GM13977 (cell line): ENCODE measurements at regions of chr1 and their contacts with region 1.

Region 1: DNA sequence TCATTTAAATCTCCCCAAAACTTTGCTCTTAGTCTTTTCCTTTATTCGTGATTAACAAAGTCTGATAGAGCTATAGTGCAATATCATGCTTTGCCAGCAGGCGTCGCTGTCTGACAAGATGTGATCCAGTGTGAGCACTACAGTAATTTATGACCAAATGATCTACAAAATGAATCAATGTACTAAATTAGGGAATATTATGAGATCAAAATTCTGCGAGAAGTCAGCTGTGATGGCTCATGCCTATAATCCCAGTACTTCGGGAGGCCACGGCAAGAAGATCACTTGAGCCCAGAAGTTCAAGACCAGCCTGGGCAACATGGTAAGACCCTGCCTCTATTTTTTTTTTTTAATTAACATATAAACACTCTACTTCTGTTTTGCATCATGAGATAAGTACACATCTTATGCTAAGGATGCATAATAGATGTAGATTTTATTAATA is 3.6 kb upstream of the SPSB1 start:
- DNase-seq: peak; percentile 65
- CTCF ChIP-seq: peak; percentile 94

Region 2: DNA sequence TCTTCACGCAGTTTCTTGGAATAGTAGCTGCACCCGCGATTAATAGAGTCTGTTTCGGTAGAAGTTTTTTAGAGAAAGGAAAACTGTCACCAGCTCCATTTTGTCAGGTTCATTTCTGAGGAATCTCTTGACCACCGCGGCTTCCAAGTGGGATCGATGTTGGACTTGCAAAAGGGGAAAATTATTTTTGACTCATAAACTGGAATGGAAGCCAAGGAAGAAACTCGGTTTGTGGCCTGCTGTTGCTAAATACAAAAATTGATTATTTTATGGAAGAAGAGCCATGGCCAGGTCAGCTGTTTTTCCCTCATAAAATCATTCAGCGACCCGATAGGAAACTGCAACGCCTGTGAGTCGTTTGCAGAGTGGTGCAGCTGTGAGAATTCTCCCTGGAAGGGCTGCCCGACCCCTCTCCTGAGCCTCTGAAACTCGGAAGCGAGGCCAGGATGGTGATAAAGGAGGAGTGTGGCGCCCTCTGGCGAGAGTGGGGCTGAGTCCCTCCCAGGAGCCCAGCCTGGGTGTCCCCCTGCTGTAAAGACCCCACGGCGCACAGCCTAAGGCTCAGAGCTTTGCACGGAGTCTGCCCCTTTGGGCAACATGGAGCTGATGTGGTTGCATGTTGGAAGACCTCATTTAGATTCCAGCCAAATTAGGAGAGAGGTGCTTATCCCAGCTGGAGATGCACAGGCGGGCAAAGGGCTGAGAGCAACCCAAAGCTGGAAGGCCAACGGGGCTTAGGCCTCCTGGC is 166.5 kb after region 1 on chr1:
- in situ Hi-C with region 1: loop called (anchors 10 kb)
- DNase-seq: peak; percentile 81
- CTCF ChIP-seq: peak; percentile 90

Region 3: GRCh38 chr1:9494929-9495758 is 206.0 kb after region 1 on chr1:
- in situ Hi-C with region 1: loop called (anchors 10 kb)
- DNase-seq: peak; percentile 84
- CTCF ChIP-seq: peak; percentile 95